WTC11 (cell line): ENCODE measurements at regions of chr1 and their contacts with region 1.

Region 1: DNA sequence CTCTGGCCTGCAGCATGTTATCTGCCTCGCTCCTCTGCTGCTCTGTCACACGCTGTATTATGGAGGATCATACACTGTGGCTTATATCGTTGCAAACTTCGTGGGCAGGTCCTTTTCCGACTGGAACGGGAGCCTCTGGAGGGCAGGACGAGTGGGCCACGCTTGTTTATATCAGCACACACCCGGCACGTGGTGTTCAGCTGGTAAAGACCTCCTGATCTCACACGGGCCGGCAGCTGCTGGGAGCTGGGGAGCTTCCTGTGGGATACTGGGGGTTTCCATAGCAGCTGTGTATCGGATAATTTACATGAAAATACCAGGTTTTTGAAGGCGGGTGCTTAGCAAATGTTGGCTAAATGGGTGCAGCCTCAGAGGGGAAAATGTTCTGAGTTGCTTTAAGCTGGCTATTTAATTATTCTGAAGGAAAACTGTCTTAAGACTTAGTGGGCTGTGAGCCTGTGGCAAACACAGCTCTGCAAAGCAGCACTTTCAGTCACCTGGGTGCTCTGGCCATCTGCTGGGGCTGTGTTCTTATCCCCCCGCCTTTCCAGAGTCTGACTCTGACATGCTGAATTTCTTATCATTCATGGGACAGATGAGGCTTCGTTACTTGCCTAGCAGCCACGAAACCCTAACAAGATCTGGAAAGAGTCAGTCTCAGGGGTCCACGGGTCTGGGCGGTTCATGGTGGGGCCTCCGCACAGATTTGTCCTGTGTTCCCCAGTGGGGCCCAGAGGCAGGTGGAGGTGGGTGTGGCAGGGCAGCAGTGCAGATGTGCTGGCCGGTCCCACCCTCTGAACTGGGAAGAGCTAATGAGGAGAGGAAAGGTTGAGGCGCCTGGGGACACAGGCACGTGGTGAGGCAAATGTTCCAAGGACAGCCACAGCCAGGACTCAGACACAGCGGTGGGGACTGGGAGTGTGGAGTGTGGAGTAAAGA is 103.7 kb upstream of the GCLM start:
- DNase-seq: peak; percentile 51
- ATAC-seq: peak; percentile 70
- H3K4me3 Mint-ChIP-seq: peak overlapping the region; percentile 8
- H3K27ac Mint-ChIP-seq: no peak overlapping the region; the same call in 1 of the 2 replicates
- H3K4me1 Mint-ChIP-seq: peaks cover 34% of the 10 kb centered on the region
- H3K27me3 Mint-ChIP-seq: peaks cover 74% of the 10 kb centered on the region
- CTCF ChIP-seq: no peak

Region 2: DNA sequence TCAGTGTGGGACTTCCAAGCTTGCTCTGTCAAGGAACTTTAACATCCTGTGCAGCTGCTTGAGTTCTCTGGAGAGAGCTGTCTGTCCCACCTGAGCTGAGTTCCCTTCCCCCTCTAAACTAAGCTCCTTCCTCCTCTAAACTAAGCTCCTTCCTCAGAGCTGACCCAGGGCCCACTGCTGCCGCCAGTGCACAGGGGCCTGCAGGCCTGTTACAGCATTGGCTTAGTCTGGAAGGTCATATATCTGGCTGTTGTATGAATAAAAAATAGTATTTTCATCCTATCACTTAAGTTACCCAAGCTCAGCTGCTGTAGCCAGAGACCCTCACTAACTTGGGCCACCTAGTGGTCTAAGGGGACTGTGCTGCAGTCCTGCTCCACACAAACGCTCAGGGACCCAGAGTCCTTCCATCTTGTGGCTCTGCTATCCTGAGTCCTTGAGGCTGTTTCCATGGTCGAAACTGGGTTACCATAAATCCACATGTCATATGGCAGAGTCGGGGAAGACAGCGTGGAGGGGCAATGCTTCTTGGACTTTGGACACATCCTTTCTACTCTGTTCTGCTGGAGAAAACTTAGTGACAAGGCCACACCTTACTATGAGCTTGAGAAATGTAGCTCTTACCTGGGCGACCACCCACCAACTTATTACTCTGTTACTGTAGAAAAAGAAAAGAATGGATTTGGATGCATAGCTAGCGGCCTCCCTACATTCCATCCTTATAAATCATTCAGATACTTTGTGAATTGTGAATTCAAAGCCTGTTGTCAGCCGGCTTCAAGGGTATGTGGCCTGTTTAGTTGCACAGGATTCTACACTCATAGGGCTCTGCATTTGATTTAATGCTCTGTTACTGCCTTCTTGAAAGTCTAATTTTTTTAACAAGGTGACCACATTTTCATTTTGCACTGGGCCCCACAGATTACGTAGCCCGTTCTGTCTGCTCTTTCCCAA is 32.4 kb before region 1 on chr1:
- CTCF ChIA-PET with region 1: interaction called, 11 read pairs
- POLR2A ChIA-PET with region 1: no interaction called
- DNase-seq: peak; percentile 45
- ATAC-seq: peak; percentile 95
- H3K4me3 Mint-ChIP-seq: no peak overlapping the region
- H3K27ac Mint-ChIP-seq: no peak overlapping the region
- H3K4me1 Mint-ChIP-seq: peaks cover 17% of the 10 kb centered on the region
- H3K27me3 Mint-ChIP-seq: no peaks in the 10 kb centered on the region
- CTCF ChIP-seq: peak; percentile 49

Region 3: DNA sequence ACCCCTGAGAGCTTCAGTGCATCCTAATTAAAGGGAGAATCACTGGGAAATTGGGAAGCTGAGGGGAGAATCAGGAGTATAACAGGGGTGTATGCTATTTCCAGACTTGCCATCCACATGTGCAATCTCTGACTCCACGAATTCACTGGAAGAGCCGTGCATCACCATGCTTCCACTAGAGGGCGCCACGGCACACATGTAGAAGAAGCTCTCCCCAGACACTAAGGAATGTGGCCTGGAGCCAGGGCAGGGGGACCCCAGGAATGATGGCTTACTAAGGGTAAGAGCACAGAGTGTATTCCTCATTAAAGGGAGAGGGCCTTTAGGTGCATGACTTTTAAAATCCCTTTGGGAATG is 26.5 kb after region 1 on chr1:
- CTCF ChIA-PET with region 1: interaction called, 19 read pairs
- POLR2A ChIA-PET with region 1: no interaction called
- DNase-seq: peak; percentile 86
- ATAC-seq: peak; percentile 90
- H3K4me3 Mint-ChIP-seq: no peak overlapping the region
- H3K27ac Mint-ChIP-seq: no peak overlapping the region
- H3K4me1 Mint-ChIP-seq: peaks cover 20% of the 10 kb centered on the region
- H3K27me3 Mint-ChIP-seq: peaks cover 5% of the 10 kb centered on the region; the same call in 1 of the 2 replicates
- CTCF ChIP-seq: peak; percentile 84